ENCODE measurements at regions of chr7 and their contacts with region 1.

Region 1: DNA sequence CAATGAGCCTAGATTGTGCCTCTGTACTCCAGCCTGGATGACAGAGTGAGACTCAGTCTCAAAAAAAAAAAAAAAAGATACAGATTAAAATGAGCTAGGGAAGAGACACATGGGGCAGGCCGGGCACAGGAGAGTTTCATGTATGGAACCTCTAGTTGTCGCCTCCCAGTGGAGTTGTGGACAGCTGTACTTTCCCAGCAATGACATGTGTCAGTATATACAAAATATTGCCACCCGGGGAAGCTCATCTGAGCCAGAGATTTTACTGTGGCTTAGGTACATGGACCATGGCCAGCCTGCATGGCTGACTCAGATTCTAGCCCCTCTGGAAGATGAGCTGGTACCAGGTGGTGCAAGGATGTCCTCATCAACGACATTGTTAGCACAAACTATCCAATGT is 87.4 kb downstream of the COL26A1 start:
- DNase-seq: no peak
- H3K4me3 ChIP-seq: no peak overlapping the region
- H3K27ac ChIP-seq: no peak overlapping the region
- H3K4me1 ChIP-seq: no peaks in the 10 kb centered on the region
- H3K27me3 ChIP-seq: 0 out of 7 replicates have a peak, but pooled peaks cover 0 to 2% (median 0%) of the 10 kb centered on the region in 4 experiments
- CTCF ChIP-seq: no peak
- EP300 ChIP-seq: no peak
- POLR2A ChIP-seq: no peak
- RAD21 ChIP-seq: no peak

Region 2: DNA sequence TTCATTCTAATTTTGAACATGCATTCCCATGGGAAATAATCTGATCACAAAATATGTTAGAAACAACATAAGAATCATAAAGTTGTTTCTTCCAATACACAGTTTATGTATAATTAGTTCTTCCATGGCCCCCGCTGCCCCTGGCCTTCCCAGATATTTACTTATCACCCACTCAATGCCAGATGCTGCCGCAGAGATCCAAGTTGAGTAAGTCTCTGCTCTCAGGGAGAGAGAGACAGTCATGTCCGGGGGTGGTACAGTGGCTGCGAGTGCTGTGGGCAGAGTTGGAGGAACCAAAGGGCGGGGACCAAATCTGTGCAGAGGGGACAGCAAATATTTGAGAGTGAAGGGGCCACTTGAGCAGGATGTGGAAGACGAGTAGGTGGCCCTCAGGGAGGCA is 50.3 kb before region 1 on chr7:
- CTCF ChIA-PET with region 1: no interaction called
- POLR2A ChIA-PET with region 1: no interaction called
- DNase-seq: no peak
- H3K4me3 ChIP-seq: no peak overlapping the region
- H3K27ac ChIP-seq: no peak overlapping the region
- H3K4me1 ChIP-seq: peaks cover 17 to 33% (median 19%) of the 10 kb centered on the region in 4 experiments
- H3K27me3 ChIP-seq: no peaks in the 10 kb centered on the region
- CTCF ChIP-seq: no peak
- EP300 ChIP-seq: no peak
- POLR2A ChIP-seq: no peak
- RAD21 ChIP-seq: no peak

Region 3: GRCh38 chr7:101436857-101437576 is 13.0 kb before region 1 on chr7:
- CTCF ChIA-PET with region 1: interaction called, 11 read pairs
- POLR2A ChIA-PET with region 1: interaction called, 3 read pairs
- DNase-seq: peak; percentile 44 to 91
- H3K4me3 ChIP-seq: no peak overlapping the region
- H3K27ac ChIP-seq: no peak overlapping the region
- H3K4me1 ChIP-seq: peaks cover 4 to 19% (median 11%) of the 10 kb centered on the region in 4 experiments
- H3K27me3 ChIP-seq: no peaks in the 10 kb centered on the region
- CTCF ChIP-seq: no peak
- EP300 ChIP-seq: no peak
- POLR2A ChIP-seq: no peak
- RAD21 ChIP-seq: no peak

Region 4: DNA sequence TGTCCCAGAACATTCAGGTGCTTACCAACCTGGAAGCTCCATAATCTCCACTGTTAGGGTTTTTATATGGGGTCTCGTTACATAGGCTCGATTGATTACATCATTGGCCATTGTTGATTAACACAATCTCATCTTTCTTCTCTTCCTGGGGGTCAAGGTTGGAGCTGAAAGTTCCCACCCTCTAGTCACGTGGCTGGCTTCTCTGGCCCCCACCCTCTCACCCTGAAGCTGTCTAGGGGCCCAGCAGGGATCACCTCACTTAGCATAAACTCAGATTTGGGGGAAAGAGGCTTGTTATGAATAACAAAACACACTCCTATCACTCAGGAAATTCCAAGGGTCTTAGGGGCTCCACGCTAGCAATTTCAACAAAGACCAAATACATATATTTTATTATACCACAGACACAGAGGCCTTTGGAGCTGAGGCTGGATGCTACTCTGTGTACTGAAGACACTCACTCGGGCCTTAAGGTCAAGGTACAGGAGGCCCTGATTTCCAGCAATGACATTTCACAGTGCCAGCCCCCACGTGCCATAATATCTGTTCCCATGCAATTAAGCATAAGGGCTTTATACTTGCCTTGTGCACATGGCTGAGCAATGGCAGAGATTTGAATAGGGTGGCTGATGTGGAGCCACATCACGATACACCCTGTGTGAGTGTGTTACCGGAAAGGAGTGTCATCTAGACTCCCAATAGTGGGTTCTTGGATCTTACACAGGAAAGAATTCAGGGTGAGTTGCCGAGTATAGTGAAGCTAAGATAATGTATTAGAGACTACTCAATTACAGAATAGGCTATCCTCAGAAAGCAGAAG is 20.8 kb after region 1 on chr7:
- CTCF ChIA-PET with region 1: no interaction called
- POLR2A ChIA-PET with region 1: no interaction called
- DNase-seq: no peak
- H3K4me3 ChIP-seq: no peak overlapping the region
- H3K27ac ChIP-seq: no peak overlapping the region
- H3K4me1 ChIP-seq: peaks cover 0 to 11% (median 4%) of the 10 kb centered on the region in 4 experiments; a peak in 4 of 7 replicates
- H3K27me3 ChIP-seq: no peaks in the 10 kb centered on the region
- CTCF ChIP-seq: no peak
- EP300 ChIP-seq: no peak
- POLR2A ChIP-seq: no peak
- RAD21 ChIP-seq: no peak

Region 5: GRCh38 chr7:101681170-101682007 is 231.3 kb after region 1 on chr7:
- CTCF ChIA-PET with region 1: no interaction called
- POLR2A ChIA-PET with region 1: no interaction called
- DNase-seq: no peak
- H3K4me3 ChIP-seq: no peak overlapping the region
- H3K27ac ChIP-seq: no peak overlapping the region
- H3K4me1 ChIP-seq: peaks cover 0 to 10% (median 8%) of the 10 kb centered on the region in 4 experiments; a peak in 4 of 7 replicates
- H3K27me3 ChIP-seq: no peaks in the 10 kb centered on the region
- CTCF ChIP-seq: no peak
- EP300 ChIP-seq: no peak
- POLR2A ChIP-seq: no peak
- RAD21 ChIP-seq: no peak

Measured in H1 (cell line).